Activated naive CD4-positive, alpha-beta T cell treated with anti-CD3 and anti-CD28 coated beads for 36 hours (primary cell): ENCODE measurements at regions of chr18 and their contacts with region 1.

Region 1: DNA sequence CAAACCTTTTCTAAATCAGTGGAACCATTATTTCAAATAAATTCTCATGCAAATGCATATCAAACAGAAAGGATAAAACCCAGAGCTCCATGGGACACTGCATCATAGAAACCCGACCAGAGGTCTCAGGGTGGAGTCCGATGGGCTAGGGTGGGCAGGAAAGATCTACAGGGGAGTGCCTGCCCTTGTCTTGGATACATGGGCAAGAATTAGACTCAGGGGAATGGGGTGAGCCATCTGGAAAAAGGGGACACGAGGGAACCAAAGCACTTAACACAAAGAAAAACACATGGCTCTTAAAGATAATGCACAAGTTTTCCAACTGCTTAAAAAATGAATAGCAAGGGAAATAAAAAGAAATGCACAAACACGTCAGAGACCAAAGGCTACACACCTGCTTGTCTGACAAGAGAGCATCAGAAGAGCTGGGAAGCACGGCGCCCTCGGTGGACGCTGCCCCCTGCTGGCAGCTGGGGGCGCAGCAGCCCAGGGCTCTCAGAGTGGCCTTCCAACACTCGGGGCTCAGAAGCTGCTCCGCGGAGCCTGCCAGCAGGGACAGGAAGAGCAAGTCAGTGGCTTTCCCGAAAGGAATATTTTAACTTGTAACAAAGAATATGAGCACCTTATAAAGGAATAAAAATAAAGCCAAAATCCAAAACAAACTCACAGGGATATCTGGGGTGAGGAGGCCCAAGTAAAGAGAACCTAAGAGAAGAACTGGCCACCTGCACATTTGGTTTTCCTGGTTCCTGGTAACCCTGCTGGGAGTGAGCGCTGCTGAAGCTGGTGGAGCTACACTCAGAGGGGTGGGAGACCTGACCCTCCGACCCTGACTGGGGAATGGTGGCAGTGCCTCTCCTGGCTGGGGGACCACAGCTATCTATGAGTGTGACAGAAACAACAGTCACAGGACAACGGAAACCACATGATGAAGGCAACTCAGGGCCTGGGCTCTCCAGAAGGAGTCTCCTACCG is 54.5 kb downstream of the SIGLEC15 start:
- DNase-seq: peak; percentile 78
- H3K4me3 Mint-ChIP-seq: no peak overlapping the region
- H3K27ac Mint-ChIP-seq: no peak overlapping the region
- H3K4me1 Mint-ChIP-seq: peaks cover 15% of the 10 kb centered on the region
- H3K27me3 Mint-ChIP-seq: no peaks in the 10 kb centered on the region

Region 2: GRCh38 chr18:45355944-45356520 is 523.9 kb before region 1 on chr18:
- CTCF ChIA-PET with region 1: no interaction called
- intact Hi-C with region 1: no loop called
- DNase-seq: no peak
- H3K4me3 Mint-ChIP-seq: no peak overlapping the region
- H3K27ac Mint-ChIP-seq: no peak overlapping the region
- H3K4me1 Mint-ChIP-seq: no peaks in the 10 kb centered on the region
- H3K27me3 Mint-ChIP-seq: peaks cover 2% of the 10 kb centered on the region

Region 3: DNA sequence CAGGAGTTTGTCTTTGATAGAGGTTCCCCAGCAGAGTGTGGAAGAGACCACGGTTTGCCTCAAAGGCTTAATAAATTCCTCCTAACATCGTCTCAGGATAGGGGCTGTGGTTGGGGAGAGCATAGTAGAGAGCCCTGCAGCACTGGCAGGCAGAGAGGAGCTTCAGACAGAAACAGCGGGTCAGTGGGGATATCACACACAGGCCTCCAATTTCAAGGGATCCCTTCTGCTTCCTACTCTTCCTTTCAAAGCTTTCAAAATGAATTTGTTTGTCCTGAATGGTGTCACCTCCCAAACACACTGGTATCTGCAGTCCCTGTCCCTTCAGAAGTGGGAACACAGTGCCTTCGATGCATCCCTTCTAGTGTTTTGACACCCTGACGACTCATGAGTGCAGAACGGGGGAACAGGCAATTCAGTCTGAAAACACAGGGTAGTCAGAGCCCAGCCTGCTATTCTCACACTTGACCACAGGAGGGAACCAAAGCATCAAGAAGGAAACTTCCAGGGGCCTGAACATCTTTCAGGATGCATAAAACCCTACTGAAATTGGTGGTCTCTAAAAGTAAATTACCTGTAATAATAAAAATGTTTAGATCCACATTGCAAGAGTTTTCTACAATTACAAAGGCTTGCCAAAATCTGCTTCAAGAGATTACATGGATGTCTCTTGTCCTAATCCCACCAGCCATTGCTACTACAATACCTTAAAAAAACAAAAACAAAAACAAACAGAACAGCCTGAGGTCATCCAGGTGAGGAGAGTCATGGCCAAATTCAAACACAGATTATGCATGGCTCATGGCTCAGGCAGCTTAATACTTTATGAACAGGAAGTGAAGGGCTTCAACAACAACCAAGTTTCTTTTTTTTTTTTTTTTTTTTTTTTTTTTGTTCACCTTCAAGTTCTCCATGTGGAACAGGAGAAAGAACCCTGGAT is 214.9 kb before region 1 on chr18:
- CTCF ChIA-PET with region 1: interaction called, 128 read pairs
- intact Hi-C with region 1: loop called (anchors 1 kb)
- DNase-seq: peak; percentile 82
- H3K4me3 Mint-ChIP-seq: no peak overlapping the region
- H3K27ac Mint-ChIP-seq: no peak overlapping the region
- H3K4me1 Mint-ChIP-seq: peaks cover 52% of the 10 kb centered on the region
- H3K27me3 Mint-ChIP-seq: no peaks in the 10 kb centered on the region

Region 4: DNA sequence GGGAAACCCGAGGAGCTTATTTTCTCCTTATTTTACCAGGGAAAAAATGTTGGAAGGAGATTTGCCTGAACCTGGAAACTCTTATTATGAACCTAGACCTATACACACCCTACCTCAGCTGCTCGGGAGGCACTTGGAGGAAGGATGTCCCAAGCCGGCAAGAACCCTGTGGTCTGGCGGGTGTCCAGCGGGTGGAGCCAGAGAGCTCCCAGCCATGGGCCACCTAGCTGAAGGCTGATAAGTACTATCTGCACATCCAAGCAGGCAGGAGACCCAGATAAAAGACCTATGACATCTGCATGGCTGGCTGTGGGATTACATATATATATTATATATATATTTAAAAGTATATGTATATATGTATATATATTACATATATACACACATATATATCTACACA is 157.1 kb before region 1 on chr18:
- CTCF ChIA-PET with region 1: interaction called, 99 read pairs
- intact Hi-C with region 1: loop called (anchors 1 kb)
- DNase-seq: peak; percentile 87
- H3K4me3 Mint-ChIP-seq: no peak overlapping the region
- H3K27ac Mint-ChIP-seq: no peak overlapping the region
- H3K4me1 Mint-ChIP-seq: no peaks in the 10 kb centered on the region
- H3K27me3 Mint-ChIP-seq: peaks cover 5% of the 10 kb centered on the region

Region 5: GRCh38 chr18:45850021-45850420 is 29.9 kb before region 1 on chr18:
- CTCF ChIA-PET with region 1: interaction called, 13 read pairs
- intact Hi-C with region 1: loop called (anchors 2 kb)
- DNase-seq: no peak
- H3K4me3 Mint-ChIP-seq: no peak overlapping the region
- H3K27ac Mint-ChIP-seq: no peak overlapping the region
- H3K4me1 Mint-ChIP-seq: no peaks in the 10 kb centered on the region
- H3K27me3 Mint-ChIP-seq: no peaks in the 10 kb centered on the region

Region 6: GRCh38 chr18:45863469-45863868 is 16.5 kb before region 1 on chr18:
- CTCF ChIA-PET with region 1: interaction called, 13 read pairs
- intact Hi-C with region 1: no loop called
- DNase-seq: no peak
- H3K4me3 Mint-ChIP-seq: no peak overlapping the region
- H3K27ac Mint-ChIP-seq: no peak overlapping the region
- H3K4me1 Mint-ChIP-seq: peaks cover 10% of the 10 kb centered on the region
- H3K27me3 Mint-ChIP-seq: no peaks in the 10 kb centered on the region

Region 7: GRCh38 chr18:45910405-45911023 is 30.5 kb after region 1 on chr18:
- CTCF ChIA-PET with region 1: interaction called, 11 read pairs
- intact Hi-C with region 1: no loop called
- DNase-seq: peak; percentile 76
- H3K4me3 Mint-ChIP-seq: no peak overlapping the region
- H3K27ac Mint-ChIP-seq: no peak overlapping the region
- H3K4me1 Mint-ChIP-seq: no peaks in the 10 kb centered on the region
- H3K27me3 Mint-ChIP-seq: no peaks in the 10 kb centered on the region

Region 8: GRCh38 chr18:46574000-46574742 is 694.2 kb after region 1 on chr18:
- CTCF ChIA-PET with region 1: no interaction called
- intact Hi-C with region 1: no loop called
- DNase-seq: no peak
- H3K4me3 Mint-ChIP-seq: no peak overlapping the region
- H3K27ac Mint-ChIP-seq: no peak overlapping the region
- H3K4me1 Mint-ChIP-seq: no peaks in the 10 kb centered on the region
- H3K27me3 Mint-ChIP-seq: no peaks in the 10 kb centered on the region